ENCODE measurements at regions of chr17 and their contacts with region 1.

Region 1: GRCh38 chr17:80254396-80255251 is 6.0 kb upstream of the RNF213 start:
- DNase-seq: peak; percentile 92
- H3K4me3 Mint-ChIP-seq: peak overlapping the region; percentile 60
- H3K27ac Mint-ChIP-seq: peak overlapping the region; percentile 95
- H3K4me1 Mint-ChIP-seq: peaks cover 17% of the 10 kb centered on the region
- H3K27me3 Mint-ChIP-seq: no peaks in the 10 kb centered on the region
- CTCF ChIP-seq: no peak

Region 2: DNA sequence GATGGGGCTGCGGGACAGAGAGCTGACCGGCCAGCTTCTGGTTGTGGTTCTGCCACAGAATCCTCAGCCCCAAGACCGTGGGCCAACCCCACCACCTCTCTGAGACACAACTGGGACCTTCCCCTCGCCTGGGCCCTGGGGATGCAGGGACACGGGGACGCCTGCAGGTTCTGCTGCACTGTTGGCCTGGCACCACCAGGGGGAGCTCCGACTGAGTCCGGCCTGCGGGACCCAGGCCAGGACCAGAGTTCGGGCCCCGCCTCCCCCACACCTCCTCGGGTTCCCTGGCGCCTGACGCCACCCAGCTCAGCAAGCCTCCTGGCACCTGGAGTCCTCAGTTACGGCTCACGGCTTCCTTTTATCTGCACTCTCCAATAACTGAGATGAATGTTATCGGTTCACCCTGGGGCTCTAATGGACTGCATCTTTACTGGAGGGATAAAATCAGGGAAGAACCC is 246.2 kb before region 1 on chr17:
- CTCF ChIA-PET with region 1: interaction called, 6 read pairs
- POLR2A ChIA-PET with region 1: no interaction called
- intact Hi-C with region 1: loop called (anchors 2 kb)
- DNase-seq: peak; percentile 81
- H3K4me3 Mint-ChIP-seq: no peak overlapping the region
- H3K27ac Mint-ChIP-seq: no peak overlapping the region
- H3K4me1 Mint-ChIP-seq: peaks cover 7% of the 10 kb centered on the region
- H3K27me3 Mint-ChIP-seq: no peaks in the 10 kb centered on the region
- CTCF ChIP-seq: peak; percentile 93

Region 3: DNA sequence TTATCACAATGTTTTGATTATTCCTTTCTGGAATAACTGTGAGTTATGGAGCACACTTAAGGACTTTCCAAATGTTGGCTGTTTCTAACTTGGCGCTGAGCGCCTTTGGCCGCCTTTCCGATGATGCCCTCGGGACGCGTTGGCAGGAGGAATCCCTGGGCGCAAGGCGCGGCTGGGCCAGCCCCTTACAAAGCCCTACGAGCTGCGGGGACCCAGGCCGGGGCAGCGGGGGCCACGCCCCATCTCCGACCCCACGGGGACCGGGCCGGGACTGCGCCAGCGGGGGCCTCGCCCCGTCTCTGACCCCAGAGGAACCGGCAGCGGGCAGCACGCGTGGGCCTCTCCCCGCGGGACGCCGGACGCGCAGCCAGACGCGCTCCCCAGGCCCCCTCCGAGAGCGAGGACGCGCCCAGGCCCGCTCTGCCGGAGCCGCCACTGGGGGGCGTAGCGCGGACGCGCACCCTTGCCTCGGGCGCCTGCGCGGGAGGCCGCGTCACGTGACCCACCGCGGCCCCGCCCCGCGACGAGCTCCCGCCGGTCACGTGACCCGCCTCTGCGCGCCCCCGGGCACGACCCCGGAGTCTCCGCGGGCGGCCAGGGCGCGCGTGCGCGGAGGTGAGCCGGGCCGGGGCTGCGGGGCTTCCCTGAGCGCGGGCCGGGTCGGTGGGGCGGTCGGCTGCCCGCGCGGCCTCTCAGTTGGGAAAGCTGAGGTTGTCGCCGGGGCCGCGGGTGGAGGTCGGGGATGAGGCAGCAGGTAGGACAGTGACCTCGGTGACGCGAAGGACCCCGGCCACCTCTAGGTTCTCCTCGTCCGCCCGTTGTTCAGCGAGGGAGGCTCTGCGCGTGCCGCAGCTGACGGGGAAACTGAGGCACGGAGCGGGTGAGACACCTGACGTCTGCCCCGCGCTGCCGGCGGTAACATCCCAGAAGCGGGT is 153.3 kb before region 1 on chr17 and contains the start of gene GAA:
- CTCF ChIA-PET with region 1: no interaction called
- POLR2A ChIA-PET with region 1: interaction called, 5 read pairs
- intact Hi-C with region 1: loop called (anchors 1 kb)
- DNase-seq: peak; percentile 68
- H3K4me3 Mint-ChIP-seq: peak within 1 kb of the TSS; percentile 79
- H3K27ac Mint-ChIP-seq: peak within 1 kb of the TSS; percentile 67
- H3K4me1 Mint-ChIP-seq: peaks cover 18% of the 10 kb centered on the region
- H3K27me3 Mint-ChIP-seq: no peaks in the 10 kb centered on the region
- CTCF ChIP-seq: peak; percentile 69
- total RNA-seq, gene GAA: 26.0 and 31.3 TPM in 2 replicates

Region 4: GRCh38 chr17:80195731-80196529 is 58.7 kb before region 1 on chr17:
- CTCF ChIA-PET with region 1: interaction called, 5 read pairs
- POLR2A ChIA-PET with region 1: interaction called, 3 read pairs
- intact Hi-C with region 1: loop called (anchors 1 kb)
- DNase-seq: peak; percentile 26
- H3K4me3 Mint-ChIP-seq: no peak overlapping the region
- H3K27ac Mint-ChIP-seq: no peak overlapping the region
- H3K4me1 Mint-ChIP-seq: no peaks in the 10 kb centered on the region
- H3K27me3 Mint-ChIP-seq: no peaks in the 10 kb centered on the region
- CTCF ChIP-seq: peak; percentile 93

Region 5: DNA sequence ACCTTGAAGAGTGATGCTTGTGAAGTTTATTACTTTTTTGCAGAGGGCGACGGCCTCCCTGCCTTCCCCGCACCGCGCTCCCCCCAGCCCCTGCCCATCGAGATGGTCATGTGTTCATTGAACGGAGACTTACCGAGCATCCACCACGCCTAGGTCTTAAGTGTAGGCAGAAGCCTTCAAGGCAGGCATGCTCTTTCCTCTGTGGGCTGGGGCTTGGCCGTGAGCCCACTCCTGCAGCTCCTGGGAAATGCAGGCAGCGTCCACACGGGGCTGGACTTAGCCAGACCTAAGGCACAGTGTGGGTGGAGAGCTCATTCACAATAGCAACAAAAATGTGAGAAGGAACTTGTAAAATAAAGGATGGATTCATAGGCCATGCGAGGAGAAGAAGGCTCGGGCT is 25.3 kb after region 1 on chr17:
- CTCF ChIA-PET with region 1: interaction called, 3 read pairs
- POLR2A ChIA-PET with region 1: interaction called, 37 read pairs
- intact Hi-C with region 1: no loop called
- DNase-seq: peak; percentile 90
- H3K4me3 Mint-ChIP-seq: peak overlapping the region; percentile 72
- H3K27ac Mint-ChIP-seq: peak overlapping the region; percentile 19
- H3K4me1 Mint-ChIP-seq: peaks cover 35% of the 10 kb centered on the region
- H3K27me3 Mint-ChIP-seq: no peaks in the 10 kb centered on the region
- CTCF ChIP-seq: no peak